Testis (tissue), 5 donors: ENCODE measurements at regions of chr14 and their contacts with region 1.

Region 1: DNA sequence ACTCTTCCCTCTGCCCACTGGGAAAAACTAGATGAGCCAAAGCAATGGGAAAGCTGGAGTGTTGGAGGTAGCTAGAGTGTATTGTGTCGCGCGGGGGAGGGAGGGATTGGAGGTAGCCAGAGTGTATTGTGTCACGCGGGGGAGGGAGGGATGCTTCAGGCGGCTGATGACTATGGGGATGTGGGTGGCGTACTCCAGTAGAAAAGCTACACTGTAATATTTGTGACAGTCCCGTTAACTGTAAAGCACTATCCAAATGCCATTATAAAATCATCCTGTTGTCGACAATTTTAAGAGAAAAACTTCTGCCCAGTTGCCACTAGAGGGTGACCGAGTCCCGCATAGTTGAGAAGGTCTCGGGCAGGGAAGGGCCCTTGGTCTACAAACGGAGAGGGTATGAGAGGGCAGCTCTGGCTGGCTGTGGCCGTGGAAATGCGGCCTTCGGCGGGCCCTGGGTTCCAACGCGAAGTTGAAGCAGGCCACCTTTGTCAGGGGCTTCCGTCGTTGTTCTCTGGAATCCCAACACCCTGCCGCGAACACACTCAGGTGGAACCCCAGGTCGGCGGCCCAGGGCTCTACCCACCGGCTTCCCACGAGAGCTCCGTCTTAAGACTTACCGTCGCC is 15.1 kb upstream of the PLEK2 start:
- DNase-seq: peak; percentile 89
- H3K4me3 ChIP-seq: no peak overlapping the region
- H3K27ac ChIP-seq: peak overlapping the region in 1 of 2 donors; percentile 50
- H3K4me1 ChIP-seq: peaks cover 17% of the 10 kb centered on the region
- H3K27me3 ChIP-seq: no peaks in the 10 kb centered on the region
- CTCF ChIP-seq: peak; percentile 78 to 90 (median 89)
- POLR2A ChIP-seq: no peak

Region 2: DNA sequence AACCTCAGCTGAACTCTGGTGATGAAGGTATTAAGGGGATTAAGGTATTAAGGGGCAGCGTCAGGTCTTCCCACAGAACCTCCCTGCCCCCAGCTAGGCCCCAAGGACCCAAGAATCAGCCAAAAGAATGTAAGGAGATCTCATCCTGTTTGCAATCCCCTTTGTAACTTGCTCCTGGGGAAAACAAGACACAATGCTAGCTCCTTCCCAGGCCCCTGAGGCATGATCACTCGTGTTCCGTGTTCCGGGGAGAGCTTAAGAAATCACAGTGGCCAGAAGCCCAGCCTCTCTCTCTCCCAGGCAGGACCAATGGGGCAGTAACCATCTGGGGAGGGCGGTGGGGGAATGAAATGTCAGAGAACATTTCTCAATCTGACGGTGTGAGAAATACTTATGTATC is 139.8 kb after region 1 on chr14:
- intact Hi-C with region 1: loop called (anchors 5 kb)
- DNase-seq: no peak
- H3K4me3 ChIP-seq: no peak overlapping the region
- H3K27ac ChIP-seq: no peak overlapping the region
- H3K4me1 ChIP-seq: no peaks in the 10 kb centered on the region
- H3K27me3 ChIP-seq: no peaks in the 10 kb centered on the region
- CTCF ChIP-seq: no peak
- POLR2A ChIP-seq: no peak